Activated naive CD4-positive, alpha-beta T cell treated with anti-CD3 and anti-CD28 coated beads for 36 hours (primary cell): ENCODE measurements at regions of chr1 and their contacts with region 1.

Region 1: DNA sequence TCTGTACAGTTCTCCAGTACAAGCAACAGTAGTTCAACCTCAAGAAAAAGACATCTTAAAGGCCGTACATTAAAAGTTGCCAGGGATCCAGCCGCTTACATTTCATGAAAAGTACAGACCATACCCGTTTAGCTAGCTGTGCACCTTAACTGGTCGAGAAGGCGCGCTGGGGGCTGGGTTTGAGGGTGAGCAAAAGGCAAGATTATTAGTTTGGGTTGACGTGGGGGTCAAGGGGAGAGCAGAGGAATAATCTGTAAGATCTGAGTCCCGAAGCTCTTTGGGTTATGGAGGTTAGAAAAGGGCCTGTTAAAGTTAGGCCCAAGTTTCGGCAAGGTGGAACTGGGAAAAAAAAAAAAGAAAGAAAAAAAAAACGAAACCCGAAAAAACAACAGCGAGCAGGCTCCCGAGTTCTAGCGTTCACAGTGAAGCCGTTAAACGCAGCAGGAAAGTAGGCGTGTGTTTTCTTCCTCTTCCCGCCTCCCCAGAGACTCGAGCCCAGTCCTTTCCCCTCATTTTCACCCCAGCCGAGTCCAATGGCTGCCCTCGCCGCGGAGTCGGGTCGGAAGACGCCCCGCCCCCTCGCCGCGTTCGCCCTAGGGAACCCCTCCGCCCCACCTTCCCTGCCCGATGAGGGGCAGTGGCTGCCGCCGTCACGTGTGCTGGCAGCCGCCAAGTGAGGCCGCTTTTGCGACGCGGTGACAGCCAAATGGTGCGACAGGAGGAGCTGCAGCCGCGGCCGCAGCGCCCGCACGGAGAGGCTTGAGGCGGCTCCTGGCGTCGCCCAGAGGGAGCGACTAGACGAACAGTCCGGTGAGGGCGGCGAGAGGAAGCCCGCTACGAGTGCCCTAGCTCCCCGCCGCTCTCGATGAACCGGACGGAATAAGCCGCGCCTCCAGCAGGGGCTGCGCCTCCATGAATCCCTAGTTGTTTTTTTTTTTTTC is at the start of gene PKN2:
- DNase-seq: peak; percentile 98
- H3K4me3 Mint-ChIP-seq: peak within 1 kb of the TSS; percentile 97
- H3K27ac Mint-ChIP-seq: peak within 1 kb of the TSS; percentile 93
- H3K4me1 Mint-ChIP-seq: peaks cover 31% of the 10 kb centered on the region
- H3K27me3 Mint-ChIP-seq: no peaks in the 10 kb centered on the region
- total RNA-seq, gene PKN2: 17.2 to 17.9 TPM

Region 2: DNA sequence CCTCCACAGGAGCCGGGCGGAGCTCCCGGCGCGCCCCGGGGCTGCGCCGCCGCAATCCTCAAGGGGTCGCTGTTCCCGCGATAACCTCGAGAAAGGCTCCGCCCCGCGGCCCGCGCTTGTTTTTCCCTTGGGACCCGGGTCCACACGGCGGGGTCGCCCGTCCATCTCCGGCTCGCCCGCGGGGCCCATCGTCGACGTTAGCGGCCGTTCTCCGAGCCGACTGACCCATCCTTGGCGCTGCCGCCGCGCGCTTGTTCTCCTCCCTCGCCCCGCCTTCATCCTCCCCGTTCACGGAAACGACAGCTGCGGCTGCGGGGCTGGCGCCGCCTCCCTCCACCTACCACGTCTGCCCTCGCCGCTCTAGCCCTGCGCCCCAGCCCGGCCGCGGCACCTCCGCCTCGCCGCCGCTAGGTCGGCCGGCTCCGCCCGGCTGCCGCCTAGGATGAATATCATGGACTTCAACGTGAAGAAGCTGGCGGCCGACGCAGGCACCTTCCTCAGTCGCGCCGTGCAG is 1979.3 kb before region 1 on chr1 and contains the start of gene SH3GLB1:
- CTCF ChIA-PET with region 1: no interaction called
- intact Hi-C with region 1: loop called (anchors 10 kb)
- DNase-seq: peak; percentile 90
- H3K4me3 Mint-ChIP-seq: peak within 1 kb of the TSS; percentile 93
- H3K27ac Mint-ChIP-seq: peak within 1 kb of the TSS; percentile 98
- H3K4me1 Mint-ChIP-seq: peaks cover 40% of the 10 kb centered on the region
- H3K27me3 Mint-ChIP-seq: no peaks in the 10 kb centered on the region
- total RNA-seq, gene SH3GLB1: 45.0 to 45.5 TPM

Region 3: DNA sequence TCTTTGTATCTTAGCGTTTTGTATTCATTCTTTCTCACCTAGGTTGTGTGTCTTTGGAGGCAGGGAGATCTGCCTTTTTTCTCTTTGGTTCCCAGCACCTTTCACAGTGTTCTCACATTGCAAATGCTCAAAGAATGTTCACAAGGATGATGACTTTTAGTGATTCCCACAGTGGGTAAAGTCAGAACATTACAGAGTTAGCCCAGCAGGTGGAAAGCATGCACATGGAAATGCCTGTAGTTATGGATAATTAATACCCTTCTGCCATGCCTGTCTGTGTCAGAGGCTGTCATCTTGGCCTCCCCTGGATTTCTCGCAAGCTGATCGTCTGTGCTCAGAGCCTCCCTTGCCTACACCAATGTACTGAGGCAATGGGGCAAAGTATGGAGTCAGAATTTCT is 896.3 kb before region 1 on chr1:
- CTCF ChIA-PET with region 1: no interaction called
- intact Hi-C with region 1: no loop called
- DNase-seq: no peak
- H3K4me3 Mint-ChIP-seq: no peak overlapping the region
- H3K27ac Mint-ChIP-seq: no peak overlapping the region
- H3K4me1 Mint-ChIP-seq: no peaks in the 10 kb centered on the region
- H3K27me3 Mint-ChIP-seq: no peaks in the 10 kb centered on the region

Region 4: GRCh38 chr1:88472298-88472697 is 211.5 kb before region 1 on chr1:
- CTCF ChIA-PET with region 1: no interaction called
- intact Hi-C with region 1: no loop called
- DNase-seq: no peak
- H3K4me3 Mint-ChIP-seq: no peak overlapping the region
- H3K27ac Mint-ChIP-seq: no peak overlapping the region
- H3K4me1 Mint-ChIP-seq: no peaks in the 10 kb centered on the region
- H3K27me3 Mint-ChIP-seq: peaks cover 1% of the 10 kb centered on the region

Region 5: DNA sequence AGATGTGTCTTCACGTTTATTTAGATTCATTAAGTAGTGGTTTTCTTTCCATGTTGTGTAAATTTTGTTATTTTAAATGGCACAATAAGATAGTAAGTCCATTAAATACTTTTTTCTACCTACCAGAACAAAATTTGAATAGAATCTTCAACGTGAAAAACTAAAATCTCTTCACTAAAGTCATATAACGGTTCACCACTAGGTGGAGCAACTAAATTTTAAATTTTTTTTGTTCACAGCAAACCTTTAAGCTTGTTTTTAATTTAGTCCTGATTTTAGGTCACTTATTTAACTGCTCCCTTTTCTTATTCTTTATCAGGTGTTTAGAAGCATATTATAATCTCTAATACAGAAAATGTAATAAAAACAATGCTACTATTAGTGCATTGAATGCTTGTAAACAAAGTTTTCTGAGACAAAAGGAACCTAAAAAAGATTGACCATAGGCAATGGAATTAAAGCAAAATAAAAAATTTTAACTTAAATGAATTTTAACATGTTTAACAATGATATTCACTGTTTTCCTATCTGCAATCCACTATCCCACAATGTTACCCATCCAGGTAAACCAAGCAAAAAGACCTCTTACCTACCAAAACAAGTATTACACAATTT is 28.0 kb before region 1 on chr1:
- CTCF ChIA-PET with region 1: interaction called, 26 read pairs
- intact Hi-C with region 1: loop called (anchors 1 kb)
- DNase-seq: no peak
- H3K4me3 Mint-ChIP-seq: no peak overlapping the region
- H3K27ac Mint-ChIP-seq: no peak overlapping the region
- H3K4me1 Mint-ChIP-seq: peaks cover 14% of the 10 kb centered on the region
- H3K27me3 Mint-ChIP-seq: no peaks in the 10 kb centered on the region

Region 6: DNA sequence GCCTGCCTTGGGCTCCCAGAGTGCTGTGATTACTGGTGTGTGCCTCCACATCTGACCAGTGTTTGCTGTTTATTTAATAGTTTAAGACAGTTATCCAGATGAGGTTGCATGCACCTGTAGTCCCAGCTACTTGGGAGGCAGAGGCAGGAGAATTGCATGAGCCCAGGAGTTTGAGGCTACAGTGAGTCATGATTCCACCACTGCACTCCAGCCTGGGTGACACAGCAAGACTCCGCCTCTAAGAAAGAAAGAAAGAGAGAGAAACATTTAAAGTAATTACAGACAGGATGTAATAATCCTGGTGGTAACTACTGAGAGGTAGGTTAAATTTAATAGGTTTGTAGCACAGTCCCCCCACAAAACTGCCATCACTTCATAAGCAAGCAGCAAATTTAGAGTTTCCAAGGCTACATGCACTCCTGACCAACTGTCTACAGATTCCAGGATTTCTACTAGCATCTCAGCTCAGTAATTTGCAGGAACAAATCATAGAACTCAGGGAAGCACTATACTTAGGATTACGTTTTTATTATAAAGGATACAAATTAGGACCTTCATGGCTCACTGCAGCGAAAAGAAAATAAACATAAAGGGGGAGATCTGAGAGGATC is 89.8 kb after region 1 on chr1:
- CTCF ChIA-PET with region 1: no interaction called
- intact Hi-C with region 1: loop called (anchors 1 kb)
- DNase-seq: peak; percentile 48
- H3K4me3 Mint-ChIP-seq: no peak overlapping the region
- H3K27ac Mint-ChIP-seq: peak overlapping the region; percentile 76
- H3K4me1 Mint-ChIP-seq: peaks cover 27% of the 10 kb centered on the region
- H3K27me3 Mint-ChIP-seq: no peaks in the 10 kb centered on the region

Region 7: GRCh38 chr1:88891318-88891950 is 207.6 kb after region 1 on chr1 and contains the start of gene GTF2B:
- CTCF ChIA-PET with region 1: interaction called, 8 read pairs
- intact Hi-C with region 1: loop called (anchors 1 kb)
- DNase-seq: peak; percentile 97
- H3K4me3 Mint-ChIP-seq: peak within 1 kb of the TSS; percentile 82
- H3K27ac Mint-ChIP-seq: peak within 1 kb of the TSS; percentile 96
- H3K4me1 Mint-ChIP-seq: peaks cover 36% of the 10 kb centered on the region
- H3K27me3 Mint-ChIP-seq: no peaks in the 10 kb centered on the region
- total RNA-seq, gene GTF2B: 35.2 to 36.1 TPM

Region 8: DNA sequence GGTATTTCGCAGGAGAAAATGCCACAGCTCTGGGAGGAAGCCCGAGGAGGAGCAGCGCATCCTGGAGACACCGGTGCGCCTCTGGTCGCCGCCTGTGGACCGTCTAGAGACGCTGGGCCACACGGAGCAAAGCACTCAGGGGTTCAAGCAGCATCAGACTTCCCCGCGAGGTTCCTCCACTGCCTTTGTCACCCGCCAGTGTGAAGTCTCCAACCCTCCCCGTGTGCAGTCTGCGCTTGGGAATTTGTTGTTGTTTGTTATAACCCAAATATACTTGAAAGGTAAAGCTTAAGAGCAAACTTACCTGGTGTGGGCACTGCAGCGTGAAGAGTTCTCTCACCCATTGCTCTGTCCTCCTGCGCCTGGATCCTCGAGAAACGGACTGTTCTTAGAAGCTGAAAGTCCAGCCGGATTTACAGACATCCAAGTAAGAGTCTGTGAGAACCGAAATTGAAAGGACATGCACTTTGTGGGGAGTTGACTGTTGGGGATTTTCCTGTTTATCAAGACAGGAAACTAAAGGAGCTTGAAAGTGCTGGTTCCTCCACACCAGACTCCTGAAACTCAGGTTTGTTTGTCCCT is 514.8 kb after region 1 on chr1 and contains the start of gene GBP4:
- CTCF ChIA-PET with region 1: no interaction called
- intact Hi-C with region 1: loop called (anchors 5 kb)
- DNase-seq: peak; percentile 65
- H3K4me3 Mint-ChIP-seq: peak within 1 kb of the TSS; percentile 92
- H3K27ac Mint-ChIP-seq: peak within 1 kb of the TSS; percentile 98
- H3K4me1 Mint-ChIP-seq: peaks cover 84% of the 10 kb centered on the region
- H3K27me3 Mint-ChIP-seq: no peaks in the 10 kb centered on the region
- total RNA-seq, gene GBP4: 22.9 to 23.2 TPM